Psoas muscle (tissue), 8 donors: ENCODE measurements at regions of chr2 and their contacts with region 1.

Region 1: GRCh38 chr2:218540015-218540414 is 28.1 kb downstream of the USP37 start:
- DNase-seq: no peak
- ATAC-seq: no peak
- H3K4me3 ChIP-seq: no peak overlapping the region
- H3K27ac ChIP-seq: no peak overlapping the region
- H3K4me1 ChIP-seq: no peaks in the 10 kb centered on the region
- H3K27me3 ChIP-seq: no peaks in the 10 kb centered on the region
- CTCF ChIP-seq: no peak

Region 2: DNA sequence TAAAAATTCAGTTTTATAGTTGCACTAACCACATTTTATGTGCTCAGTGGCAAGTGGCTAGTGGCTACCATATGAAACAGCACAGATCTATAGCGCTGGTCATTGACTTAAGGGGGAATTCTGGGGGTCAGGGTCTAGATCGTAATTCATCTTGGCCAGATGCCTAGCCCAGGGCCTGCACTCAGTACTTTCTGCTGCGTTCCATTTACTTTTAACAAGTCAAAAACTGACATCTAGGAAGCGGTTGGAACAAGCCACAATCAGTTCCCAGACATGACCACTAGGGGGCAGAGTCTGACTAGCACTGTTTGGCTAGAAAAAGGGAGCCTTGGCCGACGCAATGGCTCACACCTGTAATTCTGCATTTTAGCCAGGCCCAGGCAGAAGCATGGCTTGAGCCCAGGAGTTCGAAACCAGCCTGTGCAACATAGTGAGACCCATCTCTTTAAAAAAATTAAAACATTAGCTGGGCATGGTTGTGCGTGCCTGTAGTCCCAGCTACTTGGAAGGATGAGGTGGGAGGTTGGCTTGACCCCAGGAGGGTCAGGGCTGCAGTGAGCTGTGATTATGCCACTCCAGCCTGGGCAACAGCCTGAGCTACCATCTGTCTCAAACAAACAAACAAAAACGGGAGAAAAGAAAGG is 238.7 kb before region 1 on chr2:
- intact Hi-C with region 1: no loop called
- DNase-seq: peak; percentile 69 to 83
- ATAC-seq: peak; percentile 82 to 94 (median 84)
- H3K4me3 ChIP-seq: no peak overlapping the region
- H3K27ac ChIP-seq: no peak overlapping the region
- H3K4me1 ChIP-seq: no peaks in the 10 kb centered on the region
- H3K27me3 ChIP-seq: no peaks in the 10 kb centered on the region
- CTCF ChIP-seq: peak; percentile 97

Region 3: DNA sequence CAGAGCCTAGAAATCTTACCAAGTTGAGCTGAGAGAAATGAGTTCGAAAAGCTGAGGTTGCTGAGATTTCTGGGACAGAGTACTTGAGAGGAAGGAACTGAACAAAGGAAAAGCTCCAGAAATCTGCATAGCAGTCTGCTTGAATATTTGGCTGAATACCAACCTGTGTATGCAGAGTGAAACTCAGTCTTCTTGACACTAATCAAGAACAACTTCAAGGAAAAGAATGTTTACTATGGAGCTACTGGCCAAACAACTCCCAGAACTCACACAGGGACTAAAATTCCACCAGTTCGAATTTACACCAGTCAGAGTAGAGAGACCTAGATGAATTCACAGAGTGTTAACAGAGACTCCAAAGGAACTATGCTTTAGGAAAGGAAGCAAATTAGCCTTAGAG is 38.4 kb before region 1 on chr2:
- intact Hi-C with region 1: loop called in 1 of 2 experiments (anchors 10 kb)
- DNase-seq: no peak
- ATAC-seq: no peak
- H3K4me3 ChIP-seq: no peak overlapping the region
- H3K27ac ChIP-seq: peak overlapping the region; percentile 21
- H3K4me1 ChIP-seq: no peaks in the 10 kb centered on the region
- H3K27me3 ChIP-seq: no peaks in the 10 kb centered on the region
- CTCF ChIP-seq: no peak